IMR-90 (cell line): ENCODE measurements at regions of chr7 and their contacts with region 1.

Region 1: DNA sequence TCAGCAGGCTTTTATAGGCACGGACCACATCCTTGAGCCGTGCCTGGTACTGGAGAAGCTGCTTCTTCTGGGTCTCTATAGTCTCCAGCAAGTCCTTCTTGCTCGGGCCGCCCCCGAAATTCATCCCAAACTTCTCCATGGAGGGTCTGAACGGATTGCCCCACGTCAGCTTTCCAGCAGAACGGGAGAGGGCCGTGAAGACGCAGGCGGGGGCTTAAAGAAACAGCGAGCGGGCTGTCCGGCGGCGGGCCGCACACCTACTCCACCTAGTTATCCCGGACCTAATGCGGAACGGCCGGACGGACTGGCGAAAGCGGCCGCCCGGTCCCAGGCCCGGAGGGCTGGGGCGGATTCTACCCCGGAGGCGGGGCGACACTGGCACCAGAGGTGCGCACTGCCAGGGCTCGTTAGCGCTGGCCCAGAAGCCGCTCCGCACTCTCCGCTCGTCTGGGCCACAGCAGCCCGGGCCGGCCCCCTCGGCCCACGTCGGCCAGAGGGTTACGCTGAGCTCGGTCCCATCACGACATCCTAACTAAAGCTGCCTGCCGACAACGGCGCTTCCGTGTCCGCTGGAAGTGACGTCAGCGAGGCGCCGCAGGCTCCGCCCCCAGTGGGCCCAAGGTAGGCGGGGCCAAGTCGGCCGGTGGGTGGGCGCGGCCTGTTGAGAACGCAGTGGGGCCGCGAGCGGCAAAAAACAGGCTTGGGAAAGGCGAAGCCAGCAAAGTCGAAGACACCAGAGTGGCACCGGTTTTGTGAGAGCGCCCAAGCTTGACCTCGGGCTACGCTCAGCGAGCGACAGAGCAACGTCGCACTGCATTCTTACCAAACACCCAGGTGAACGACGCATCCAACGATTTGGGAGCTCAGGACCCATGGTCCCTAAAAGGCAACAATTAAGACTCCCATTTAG is at the start of gene GCC1:
- DNase-seq: peak; percentile 87
- ATAC-seq: peak; percentile 75
- H3K4me3 ChIP-seq: peak within 1 kb of the TSS; percentile 87
- H3K27ac ChIP-seq: peak within 1 kb of the TSS; percentile 83
- H3K4me1 ChIP-seq: peaks cover 21% of the 10 kb centered on the region
- H3K27me3 ChIP-seq: no peaks in the 10 kb centered on the region
- CTCF ChIP-seq: no peak
- POLR2A ChIP-seq: peak; percentile 94
- RAD21 ChIP-seq: no peak
- total RNA-seq, gene GCC1: 20.8 and 22.9 TPM in 2 replicates

Region 2: GRCh38 chr7:127392566-127393367 is 192.5 kb before region 1 on chr7 and contains the start of gene ZNF800:
- CTCF ChIA-PET with region 1: no interaction called
- POLR2A ChIA-PET with region 1: no interaction called
- dilution Hi-C with region 1: no loop called
- in situ Hi-C with region 1: no loop called
- intact Hi-C with region 1: loop called (anchors 5 kb)
- DNase-seq: peak; percentile 82
- ATAC-seq: peak; percentile 92
- H3K4me3 ChIP-seq: peak within 1 kb of the TSS; percentile 89
- H3K27ac ChIP-seq: peak within 1 kb of the TSS; percentile 76
- H3K4me1 ChIP-seq: 0 out of 2 replicates have a peak, but pooled peaks cover 2% of the 10 kb centered on the region
- H3K27me3 ChIP-seq: no peaks in the 10 kb centered on the region
- CTCF ChIP-seq: no peak
- POLR2A ChIP-seq: peak; percentile 93
- RAD21 ChIP-seq: no peak
- total RNA-seq, gene ZNF800: 13.1 and 20.0 TPM in 2 replicates

Region 3: DNA sequence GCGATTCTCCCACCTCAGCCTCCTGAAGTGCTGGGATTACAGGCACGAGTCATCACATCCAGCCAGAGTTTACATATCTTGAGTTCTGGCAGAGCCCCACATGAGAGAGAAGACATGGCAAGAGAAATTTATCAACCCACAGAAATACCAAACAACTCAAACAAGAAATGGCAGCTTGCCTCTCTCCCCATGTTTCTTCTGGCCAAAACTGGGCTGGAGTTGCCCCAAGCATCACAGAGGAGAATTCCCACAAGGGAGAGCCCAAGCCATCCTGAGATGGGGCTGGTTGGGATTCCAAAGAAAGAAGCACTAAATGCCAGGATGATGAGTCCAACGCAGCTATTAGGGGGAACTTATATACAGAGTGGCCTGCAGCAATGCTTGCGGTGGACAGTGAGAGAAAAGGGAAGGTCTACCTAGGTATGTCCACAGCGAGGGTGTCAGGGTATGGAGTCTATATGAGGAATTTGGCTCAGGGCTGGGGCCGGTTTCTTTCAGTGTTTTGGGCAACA is 47.0 kb after region 1 on chr7:
- CTCF ChIA-PET with region 1: no interaction called
- POLR2A ChIA-PET with region 1: no interaction called
- dilution Hi-C with region 1: no loop called
- in situ Hi-C with region 1: no loop called
- intact Hi-C with region 1: loop called (anchors 2 kb)
- DNase-seq: peak; percentile 93
- ATAC-seq: peak; percentile 94
- H3K4me3 ChIP-seq: no peak overlapping the region
- H3K27ac ChIP-seq: peak overlapping the region; percentile 15; the same call in 1 of the 2 replicates
- H3K4me1 ChIP-seq: peaks cover 8% of the 10 kb centered on the region
- H3K27me3 ChIP-seq: peaks cover 2% of the 10 kb centered on the region; the same call in 1 of the 2 replicates
- CTCF ChIP-seq: no peak
- POLR2A ChIP-seq: no peak
- RAD21 ChIP-seq: no peak; the same call in 1 of the 2 replicates

Region 4: DNA sequence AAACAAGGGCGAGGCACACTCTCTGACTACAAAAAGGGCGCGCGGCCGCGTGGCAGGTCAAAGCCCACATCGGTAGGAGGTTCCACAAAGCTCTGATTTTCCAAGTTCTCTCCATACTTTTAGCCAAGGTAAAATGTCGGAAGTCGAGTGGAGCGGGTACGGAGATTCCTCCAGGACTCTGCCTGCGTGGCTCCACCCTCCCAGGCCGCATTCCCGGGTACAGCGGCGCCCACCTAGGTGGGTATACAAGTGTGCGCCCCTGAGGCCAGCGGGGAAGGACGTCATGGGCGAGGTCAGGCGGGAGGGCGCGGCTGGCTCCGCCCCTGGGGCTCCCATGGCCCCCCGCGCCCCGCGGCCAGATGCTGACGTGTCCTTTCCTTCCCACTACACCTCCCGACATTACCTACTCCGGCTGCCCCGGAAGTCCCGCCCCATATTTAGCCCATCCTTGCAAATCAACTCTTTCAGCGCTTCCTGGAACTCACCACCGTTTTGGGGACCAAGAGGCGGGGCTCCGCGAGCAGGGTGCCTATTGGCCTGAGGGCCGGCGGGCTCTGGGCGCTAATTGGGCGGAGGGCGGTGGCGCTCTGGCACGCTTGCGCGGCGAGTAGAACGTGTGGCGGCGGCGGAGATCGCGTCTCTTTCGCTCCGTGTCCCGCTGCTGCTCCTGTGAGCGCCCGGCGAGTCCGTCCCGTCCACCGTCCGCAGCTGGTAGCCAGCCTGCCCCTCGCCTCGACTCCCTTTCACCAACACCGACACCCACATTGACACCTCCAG is 66.4 kb after region 1 on chr7 and contains the start of gene SND1:
- CTCF ChIA-PET with region 1: no interaction called
- POLR2A ChIA-PET with region 1: interaction called, 9 read pairs
- dilution Hi-C with region 1: no loop called
- in situ Hi-C with region 1: no loop called
- intact Hi-C with region 1: loop called (anchors 2 kb)
- DNase-seq: peak; percentile 99
- ATAC-seq: peak; percentile 96
- H3K4me3 ChIP-seq: peak within 1 kb of the TSS; percentile 91
- H3K27ac ChIP-seq: peak within 1 kb of the TSS; percentile 91
- H3K4me1 ChIP-seq: peaks cover 8% of the 10 kb centered on the region
- H3K27me3 ChIP-seq: no peaks in the 10 kb centered on the region
- CTCF ChIP-seq: no peak
- POLR2A ChIP-seq: peak; percentile 90
- RAD21 ChIP-seq: no peak
- total RNA-seq, gene SND1: 246 and 294 TPM in 2 replicates

Region 5: GRCh38 chr7:127708788-127709187 is 123.5 kb after region 1 on chr7:
- CTCF ChIA-PET with region 1: interaction called, 7 read pairs
- POLR2A ChIA-PET with region 1: interaction called, 4 read pairs
- dilution Hi-C with region 1: no loop called
- in situ Hi-C with region 1: no loop called
- intact Hi-C with region 1: loop called (anchors 2 kb)
- DNase-seq: peak; percentile 86
- ATAC-seq: peak; percentile 64
- H3K4me3 ChIP-seq: no peak overlapping the region
- H3K27ac ChIP-seq: no peak overlapping the region
- H3K4me1 ChIP-seq: peaks cover 6% of the 10 kb centered on the region
- H3K27me3 ChIP-seq: no peaks in the 10 kb centered on the region
- CTCF ChIP-seq: peak; percentile 75
- POLR2A ChIP-seq: no peak
- RAD21 ChIP-seq: peak; percentile 88

Region 6: GRCh38 chr7:127905491-127906330 is 320.4 kb after region 1 on chr7:
- CTCF ChIA-PET with region 1: no interaction called
- POLR2A ChIA-PET with region 1: no interaction called
- dilution Hi-C with region 1: no loop called
- in situ Hi-C with region 1: no loop called
- intact Hi-C with region 1: no loop called
- DNase-seq: peak; percentile 76
- ATAC-seq: peak; percentile 80
- H3K4me3 ChIP-seq: no peak overlapping the region
- H3K27ac ChIP-seq: no peak overlapping the region
- H3K4me1 ChIP-seq: peaks cover 20% of the 10 kb centered on the region
- H3K27me3 ChIP-seq: no peaks in the 10 kb centered on the region
- CTCF ChIP-seq: no peak
- POLR2A ChIP-seq: no peak
- RAD21 ChIP-seq: no peak

Region 7: GRCh38 chr7:128031901-128032604 is 446.8 kb after region 1 on chr7:
- CTCF ChIA-PET with region 1: no interaction called
- POLR2A ChIA-PET with region 1: no interaction called
- dilution Hi-C with region 1: no loop called
- in situ Hi-C with region 1: no loop called
- intact Hi-C with region 1: loop called (anchors 10 kb)
- DNase-seq: peak; percentile 96
- ATAC-seq: peak; percentile 84
- H3K4me3 ChIP-seq: peak overlapping the region; percentile 64
- H3K27ac ChIP-seq: no peak overlapping the region; the same call in 1 of the 2 replicates
- H3K4me1 ChIP-seq: peaks cover 7% of the 10 kb centered on the region; the same call in 1 of the 2 replicates
- H3K27me3 ChIP-seq: no peaks in the 10 kb centered on the region
- CTCF ChIP-seq: peak; percentile 49
- POLR2A ChIP-seq: peak; percentile 54; the same call in 1 of the 2 replicates
- RAD21 ChIP-seq: peak; percentile 59